ENCODE measurements at regions of chr7 and their contacts with region 1.

Region 1: DNA sequence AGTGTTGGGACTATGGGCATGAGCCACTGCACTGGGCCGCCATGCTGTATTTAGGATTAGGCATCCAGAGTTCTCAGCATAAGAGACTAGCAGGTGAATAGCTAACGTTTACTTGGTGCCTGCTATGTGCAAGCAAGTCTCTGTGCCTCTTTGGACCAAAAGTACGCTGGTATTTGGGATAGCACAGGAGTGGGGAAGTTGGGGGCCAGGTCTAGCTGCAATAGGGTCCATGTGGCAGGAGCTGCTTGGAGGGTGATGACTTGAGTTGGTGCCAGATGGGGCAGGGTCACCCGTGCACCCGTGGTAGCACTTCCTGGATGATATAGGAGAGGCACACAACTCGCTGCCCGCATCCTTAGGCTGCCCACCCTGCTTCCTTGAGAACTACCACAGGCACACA is 22.4 kb downstream of the NACAD start:
- DNase-seq: no peak
- ATAC-seq: no peak
- H3K4me3 ChIP-seq: no peak overlapping the region
- H3K27ac ChIP-seq: no peak overlapping the region
- H3K4me1 ChIP-seq: no peaks in the 10 kb centered on the region
- H3K27me3 ChIP-seq: no peaks in the 10 kb centered on the region
- CTCF ChIP-seq: no peak

Region 2: DNA sequence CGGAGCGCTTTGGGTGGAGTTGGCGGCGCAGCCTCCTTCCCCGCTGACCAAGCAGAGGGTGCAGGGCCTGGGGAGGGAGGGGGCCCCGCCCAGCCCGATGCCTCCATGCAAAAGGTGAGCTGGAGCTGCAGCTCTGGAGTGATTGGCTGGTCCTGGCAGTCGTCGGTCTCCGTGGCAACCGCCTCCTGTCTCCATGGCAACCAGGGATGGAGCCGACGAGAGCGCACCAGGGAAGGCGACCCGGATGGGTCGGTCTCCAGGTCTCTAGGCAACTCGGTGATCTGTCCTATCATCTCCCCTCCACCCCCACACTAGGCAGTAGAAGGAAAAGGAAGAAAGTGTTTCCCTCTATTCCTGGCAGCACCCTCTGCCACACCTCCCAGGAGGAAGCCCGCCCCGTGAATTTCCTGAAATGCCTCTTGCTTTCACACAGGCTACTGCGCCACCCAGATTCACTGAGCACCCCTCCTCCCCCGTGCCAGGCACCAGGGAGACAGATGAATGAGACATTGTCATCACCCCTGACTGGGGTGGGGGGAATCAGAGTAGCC is 23.0 kb after region 1 on chr7:
- CTCF ChIA-PET with region 1: no interaction called
- POLR2A ChIA-PET with region 1: interaction called, 10 read pairs
- in situ Hi-C with region 1: no loop called
- intact Hi-C with region 1: no loop called
- DNase-seq: no peak
- ATAC-seq: peak; percentile 69
- H3K4me3 ChIP-seq: peak overlapping the region; percentile 47 to 61
- H3K27ac ChIP-seq: no peak overlapping the region
- H3K4me1 ChIP-seq: peaks cover 11% of the 10 kb centered on the region; the same call in 1 of the 2 replicates
- H3K27me3 ChIP-seq: 0 out of 2 replicates have a peak, but pooled peaks cover 2% of the 10 kb centered on the region
- CTCF ChIP-seq: no peak

Region 3: GRCh38 chr7:45278763-45279398 is 212.5 kb after region 1 on chr7:
- CTCF ChIA-PET with region 1: no interaction called
- POLR2A ChIA-PET with region 1: no interaction called
- in situ Hi-C with region 1: no loop called
- intact Hi-C with region 1: no loop called
- DNase-seq: no peak
- ATAC-seq: no peak
- H3K4me3 ChIP-seq: no peak overlapping the region
- H3K27ac ChIP-seq: no peak overlapping the region
- H3K4me1 ChIP-seq: no peaks in the 10 kb centered on the region
- H3K27me3 ChIP-seq: peaks cover 22% of the 10 kb centered on the region
- CTCF ChIP-seq: no peak

Measured in Panc1 (cell line).